ENCODE measurements at regions of chr16 and their contacts with region 1.

Region 1: DNA sequence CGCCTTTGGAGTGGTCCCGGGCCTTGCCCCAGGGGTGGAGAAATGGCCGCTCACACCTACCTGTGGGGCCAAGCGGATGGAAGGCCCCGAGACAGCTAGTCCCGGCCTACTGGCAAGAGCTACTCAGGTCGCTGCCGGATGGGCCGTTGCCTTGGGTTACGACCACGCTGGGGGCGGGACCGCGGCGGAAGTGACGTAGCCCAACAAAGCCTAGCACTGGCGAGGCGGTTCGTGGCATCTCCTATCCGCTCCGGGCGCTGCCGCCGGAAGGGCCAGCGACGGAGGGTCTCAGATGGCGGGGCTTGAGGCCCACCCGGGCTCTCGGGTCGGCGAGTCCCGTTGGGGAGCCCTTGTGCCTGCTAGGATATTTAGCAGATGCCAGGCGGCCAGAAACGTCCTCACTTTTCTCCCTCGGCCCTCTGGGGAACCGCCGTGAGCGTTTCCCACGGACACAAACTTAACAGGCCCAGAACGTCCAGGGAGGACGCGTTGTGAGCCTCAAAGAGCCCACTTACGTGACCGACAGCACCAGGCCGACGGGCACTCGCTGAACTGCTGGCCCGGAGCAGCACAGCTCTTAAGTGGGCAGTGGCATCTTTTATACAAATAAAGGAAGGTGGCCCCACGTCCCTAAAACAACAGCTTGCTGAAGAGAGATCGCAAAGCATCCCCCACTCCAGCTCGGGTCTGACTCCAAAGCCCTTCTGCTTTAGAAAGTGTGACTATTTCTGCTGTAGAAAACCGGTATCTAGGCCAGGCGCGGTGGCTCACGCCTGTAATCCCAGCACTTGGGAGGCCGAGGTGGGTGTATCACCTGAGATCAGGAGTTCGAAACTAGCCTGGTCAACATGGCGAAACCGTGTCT is at the start of gene C16orf46:
- DNase-seq: peak; percentile 95 to 100 (median 96)
- ATAC-seq: peak; percentile 69
- H3K4me3 ChIP-seq: peak within 1 kb of the TSS; percentile 80 to 92
- H3K4me3 Mint-ChIP-seq: no peak within 1 kb of the TSS
- H3K27ac ChIP-seq: peak within 1 kb of the TSS; percentile 93 to 97
- H3K27ac Mint-ChIP-seq: no peak within 1 kb of the TSS
- H3K4me1 ChIP-seq: peaks cover 11% of the 10 kb centered on the region
- H3K4me1 Mint-ChIP-seq: peaks cover 4% of the 10 kb centered on the region
- H3K27me3 ChIP-seq: no peaks in the 10 kb centered on the region
- H3K27me3 Mint-ChIP-seq: no peaks in the 10 kb centered on the region
- CTCF ChIP-seq: no peak
- total RNA-seq, gene C16orf46: 0.47 to 0.76 TPM

Region 2: GRCh38 chr16:81035398-81035974 is 41.8 kb before region 1 on chr16 and contains the start of gene ATMIN:
- CTCF ChIA-PET with region 1: interaction called, 47 read pairs
- POLR2A ChIA-PET with region 1: interaction called, 17 read pairs
- intact Hi-C with region 1: loop called (anchors 1 kb)
- DNase-seq: peak; percentile 79 to 94 (median 90)
- ATAC-seq: peak; percentile 97
- H3K4me3 ChIP-seq: peak within 1 kb of the TSS; percentile 47 to 59
- H3K4me3 Mint-ChIP-seq: peak within 1 kb of the TSS; percentile 87
- H3K27ac ChIP-seq: peak within 1 kb of the TSS in 1 of 2 experiments; percentile 34
- H3K27ac Mint-ChIP-seq: peak within 1 kb of the TSS; percentile 82
- H3K4me1 ChIP-seq: peaks cover 20% of the 10 kb centered on the region
- H3K4me1 Mint-ChIP-seq: peaks cover 34% of the 10 kb centered on the region
- H3K27me3 ChIP-seq: no peaks in the 10 kb centered on the region
- H3K27me3 Mint-ChIP-seq: no peaks in the 10 kb centered on the region
- CTCF ChIP-seq: peak; percentile 99
- total RNA-seq, gene ATMIN: 32.2 to 35.1 TPM

Region 3: GRCh38 chr16:81095953-81096717 is 18.8 kb after region 1 on chr16 and contains the start of gene GCSH:
- CTCF ChIA-PET with region 1: interaction called, 3 read pairs
- POLR2A ChIA-PET with region 1: interaction called, 10 read pairs
- intact Hi-C with region 1: loop called (anchors 1 kb)
- DNase-seq: peak; percentile 94 to 100 (median 98)
- ATAC-seq: peak; percentile 97
- H3K4me3 ChIP-seq: peak within 1 kb of the TSS; percentile 59 to 71
- H3K4me3 Mint-ChIP-seq: peak within 1 kb of the TSS; percentile 88
- H3K27ac ChIP-seq: peak within 1 kb of the TSS; percentile 43 to 58
- H3K27ac Mint-ChIP-seq: peak within 1 kb of the TSS; percentile 49
- H3K4me1 ChIP-seq: peaks cover 7% of the 10 kb centered on the region
- H3K4me1 Mint-ChIP-seq: peaks cover 14% of the 10 kb centered on the region
- H3K27me3 ChIP-seq: no peaks in the 10 kb centered on the region
- H3K27me3 Mint-ChIP-seq: no peaks in the 10 kb centered on the region
- CTCF ChIP-seq: no peak
- total RNA-seq, gene GCSH: 2.5 to 2.8 TPM

Region 4: GRCh38 chr16:81715358-81716196 is 638.3 kb after region 1 on chr16:
- CTCF ChIA-PET with region 1: no interaction called
- POLR2A ChIA-PET with region 1: no interaction called
- intact Hi-C with region 1: loop called in 1 of 2 experiments (anchors 1 kb)
- DNase-seq: peak in 6 of 9 experiments; percentile 11 to 84 (median 42)
- ATAC-seq: peak; percentile 61
- H3K4me3 ChIP-seq: peak overlapping the region; percentile 8 to 26
- H3K4me3 Mint-ChIP-seq: peak overlapping the region; percentile 71
- H3K27ac ChIP-seq: peak overlapping the region in 1 of 2 experiments; percentile 70
- H3K27ac Mint-ChIP-seq: peak overlapping the region; percentile 92
- H3K4me1 ChIP-seq: peaks cover 28% of the 10 kb centered on the region
- H3K4me1 Mint-ChIP-seq: peaks cover 47% of the 10 kb centered on the region
- H3K27me3 ChIP-seq: no peaks in the 10 kb centered on the region
- H3K27me3 Mint-ChIP-seq: no peaks in the 10 kb centered on the region
- CTCF ChIP-seq: no peak

Region 5: DNA sequence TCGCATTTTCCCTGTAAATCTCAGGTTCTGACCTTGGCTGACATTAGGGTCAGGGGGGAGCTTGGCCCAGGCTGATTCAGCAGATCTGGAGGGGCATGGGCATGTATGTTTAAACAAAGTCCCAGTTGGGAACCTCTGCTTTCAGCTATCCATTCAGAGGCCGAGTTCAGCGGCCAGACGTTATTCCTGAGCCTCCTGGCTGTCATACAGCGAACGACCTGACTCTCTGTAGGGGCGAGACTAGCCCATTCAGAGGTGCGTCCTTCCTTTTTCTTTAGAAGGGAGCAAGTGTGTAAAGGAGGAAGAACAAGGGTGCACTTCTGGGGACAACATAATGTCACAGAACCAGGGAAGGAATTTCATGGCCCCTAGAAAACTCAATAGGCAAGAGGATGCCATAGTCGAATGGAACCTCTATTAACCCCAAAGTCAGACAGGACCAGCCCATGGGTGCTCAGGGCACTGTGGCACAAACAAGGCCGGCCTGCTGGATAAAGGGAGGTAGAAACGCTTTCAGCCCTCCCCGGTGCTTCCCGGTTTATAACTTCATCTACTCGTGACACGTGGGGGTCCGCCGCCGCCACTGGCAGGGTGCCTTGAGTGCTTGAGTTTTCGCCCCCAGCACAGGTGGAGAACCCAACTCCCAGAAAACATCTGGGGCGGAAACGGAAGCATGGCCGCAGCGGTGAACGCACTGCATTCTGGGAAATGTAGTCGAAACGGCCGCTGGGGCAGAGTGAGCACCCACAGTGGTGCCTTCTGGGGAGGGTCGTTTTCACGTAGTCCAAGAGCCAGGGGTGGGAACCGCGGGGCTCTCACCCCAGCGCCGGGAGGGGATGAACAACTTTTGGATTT is 668.6 kb after region 1 on chr16:
- CTCF ChIA-PET with region 1: no interaction called
- POLR2A ChIA-PET with region 1: no interaction called
- intact Hi-C with region 1: loop called in 1 of 2 experiments (anchors 1 kb)
- DNase-seq: peak; percentile 46 to 86 (median 77)
- ATAC-seq: peak; percentile 97
- H3K4me3 ChIP-seq: peak overlapping the region; percentile 48 to 60
- H3K4me3 Mint-ChIP-seq: peak overlapping the region; percentile 86
- H3K27ac ChIP-seq: peak overlapping the region; percentile 24 to 60
- H3K27ac Mint-ChIP-seq: peak overlapping the region; percentile 89
- H3K4me1 ChIP-seq: peaks cover 9% of the 10 kb centered on the region
- H3K4me1 Mint-ChIP-seq: peaks cover 11% of the 10 kb centered on the region
- H3K27me3 ChIP-seq: no peaks in the 10 kb centered on the region
- H3K27me3 Mint-ChIP-seq: no peaks in the 10 kb centered on the region
- CTCF ChIP-seq: no peak

Region 6: DNA sequence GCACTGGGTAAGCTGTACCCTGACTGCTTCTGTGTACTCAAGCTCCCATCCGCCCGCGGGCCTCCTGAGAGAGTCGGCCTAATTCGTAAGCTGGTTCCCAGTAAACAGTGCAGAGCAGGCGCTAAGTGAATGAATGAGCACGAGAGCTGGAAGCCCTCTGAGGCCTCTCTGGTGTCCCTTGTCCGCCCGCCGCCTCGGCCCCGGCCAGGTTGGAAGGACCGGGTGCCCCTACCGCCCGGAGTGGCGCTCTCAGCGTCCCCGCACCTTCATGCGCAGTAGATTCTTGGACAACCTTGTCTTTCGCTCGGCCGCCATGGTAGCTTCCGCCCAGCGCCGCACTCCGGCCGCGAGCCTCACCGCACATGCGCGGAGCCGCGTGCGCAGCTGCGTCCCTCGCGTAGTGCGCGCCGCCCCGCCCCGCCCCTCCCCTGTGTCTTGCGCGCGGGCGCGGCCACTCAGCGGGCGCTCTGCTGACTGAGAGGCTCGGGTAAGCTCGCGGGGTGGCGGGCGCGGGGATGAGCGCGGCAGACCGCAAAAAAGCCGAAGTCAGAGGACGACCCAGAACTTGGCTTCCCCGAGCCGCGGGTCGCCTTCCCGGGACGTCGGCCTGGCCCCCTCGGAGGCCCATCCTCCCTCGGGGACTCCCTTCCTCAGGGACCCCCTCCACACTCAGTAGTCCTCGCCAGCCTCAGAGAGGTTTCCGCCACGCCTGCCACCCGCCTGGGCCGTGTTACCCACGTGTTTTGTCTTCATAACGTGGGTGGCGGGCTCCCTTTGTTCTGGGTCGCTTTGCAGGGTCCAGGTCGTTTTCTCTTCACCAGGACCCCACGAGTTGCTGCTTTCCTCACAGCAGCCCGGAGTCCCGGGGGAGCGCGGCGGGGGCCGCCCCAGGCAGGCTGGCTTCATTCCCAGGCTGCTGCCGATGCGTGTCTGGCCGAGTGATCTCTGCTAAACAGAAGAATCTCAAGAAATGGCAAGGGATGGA is 1092.8 kb after region 1 on chr16 and contains the start of gene MPHOSPH6:
- CTCF ChIA-PET with region 1: no interaction called
- POLR2A ChIA-PET with region 1: no interaction called
- intact Hi-C with region 1: loop called in 1 of 2 experiments (anchors 5 kb)
- DNase-seq: peak; percentile 77 to 95 (median 90)
- ATAC-seq: peak; percentile 94
- H3K4me3 ChIP-seq: peak within 1 kb of the TSS; percentile 85 to 95
- H3K4me3 Mint-ChIP-seq: peak within 1 kb of the TSS; percentile 96
- H3K27ac ChIP-seq: peak within 1 kb of the TSS; percentile 82 to 90
- H3K27ac Mint-ChIP-seq: peak within 1 kb of the TSS; percentile 97
- H3K4me1 ChIP-seq: peaks cover 15% of the 10 kb centered on the region
- H3K4me1 Mint-ChIP-seq: peaks cover 36% of the 10 kb centered on the region
- H3K27me3 ChIP-seq: no peaks in the 10 kb centered on the region
- H3K27me3 Mint-ChIP-seq: peaks cover 3% of the 10 kb centered on the region
- CTCF ChIP-seq: no peak
- total RNA-seq, gene MPHOSPH6: 19.5 to 24.1 TPM